ENCODE measurements at regions of chr16 and their contacts with region 1.

Region 1: GRCh38 chr16:53773150-53773846 is 69.3 kb downstream of the FTO start:
- DNase-seq: peak in 1 of 2 donors; percentile 50
- ATAC-seq: peak; percentile 76 to 94 (median 90)
- H3K4me3 ChIP-seq: no peak overlapping the region
- H3K27ac ChIP-seq: peak overlapping the region in 9 of 10 donors; percentile 9 to 68 (median 51)
- H3K4me1 ChIP-seq: peaks cover 2 to 94% (median 52%) of the 10 kb centered on the region in 9 donors
- H3K27me3 ChIP-seq: no peaks in the 10 kb centered on the region
- CTCF ChIP-seq: peak; percentile 23 to 75 (median 58)

Region 2: GRCh38 chr16:53726625-53727024 is 46.7 kb before region 1 on chr16:
- intact Hi-C with region 1: no loop called
- DNase-seq: no peak
- ATAC-seq: peak in 1 of 8 donors; percentile 39
- H3K4me3 ChIP-seq: no peak overlapping the region
- H3K27ac ChIP-seq: no peak overlapping the region
- H3K4me1 ChIP-seq: peaks cover 0 to 35% (median 29%) of the 10 kb centered on the region in 9 donors
- H3K27me3 ChIP-seq: no peaks in the 10 kb centered on the region
- CTCF ChIP-seq: no peak

Region 3: DNA sequence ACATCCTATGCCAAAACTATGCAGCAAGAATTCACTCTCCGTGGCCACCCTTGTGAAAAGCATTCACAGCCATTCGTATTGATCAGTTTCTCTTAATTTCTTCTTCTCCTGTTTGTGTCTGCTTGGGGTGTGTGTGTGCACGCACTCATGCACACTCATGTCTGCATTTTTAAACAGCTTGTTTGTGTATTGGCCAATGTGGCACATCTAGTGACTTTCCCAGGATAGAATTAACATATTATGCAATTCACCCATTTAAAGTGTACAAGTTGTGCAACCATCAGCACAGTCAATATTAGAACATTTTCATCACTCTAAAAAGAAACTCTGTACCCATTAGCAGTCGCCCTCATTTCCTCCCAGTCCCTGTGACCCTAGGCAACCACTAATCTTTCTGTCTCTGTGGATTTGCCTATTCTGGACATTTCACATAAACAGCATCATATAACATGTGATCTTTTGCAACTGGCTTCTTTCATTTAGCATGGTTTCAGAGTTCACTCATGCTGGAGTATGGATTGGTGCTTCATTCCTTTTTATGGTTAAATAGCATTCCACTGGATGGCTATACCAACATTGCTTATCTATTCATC is 493.2 kb after region 1 on chr16:
- intact Hi-C with region 1: loop called in 1 of 10 experiments (anchors 5 kb)
- DNase-seq: no peak
- ATAC-seq: peak in 5 of 8 donors; percentile 29 to 62 (median 44)
- H3K4me3 ChIP-seq: no peak overlapping the region
- H3K27ac ChIP-seq: peak overlapping the region; percentile 42 to 81 (median 60)
- H3K4me1 ChIP-seq: peaks cover 0 to 28% (median 12%) of the 10 kb centered on the region in 9 donors
- H3K27me3 ChIP-seq: no peaks in the 10 kb centered on the region
- CTCF ChIP-seq: no peak

Region 4: GRCh38 chr16:55389426-55390073 is 1616.3 kb after region 1 on chr16:
- intact Hi-C with region 1: loop called in 1 of 10 experiments (anchors 5 kb)
- DNase-seq: peak; percentile 49 to 56
- ATAC-seq: peak; percentile 52 to 87 (median 67)
- H3K4me3 ChIP-seq: peak overlapping the region in 2 of 10 donors; percentile 11 to 23
- H3K27ac ChIP-seq: peak overlapping the region; percentile 31 to 94 (median 78)
- H3K4me1 ChIP-seq: peaks cover 0 to 58% (median 14%) of the 10 kb centered on the region in 9 donors
- H3K27me3 ChIP-seq: no peaks in the 10 kb centered on the region
- CTCF ChIP-seq: no peak

Measured in heart right ventricle (tissue), 16 donors.